ENCODE measurements at regions of chr15 and their contacts with region 1.

Region 1: DNA sequence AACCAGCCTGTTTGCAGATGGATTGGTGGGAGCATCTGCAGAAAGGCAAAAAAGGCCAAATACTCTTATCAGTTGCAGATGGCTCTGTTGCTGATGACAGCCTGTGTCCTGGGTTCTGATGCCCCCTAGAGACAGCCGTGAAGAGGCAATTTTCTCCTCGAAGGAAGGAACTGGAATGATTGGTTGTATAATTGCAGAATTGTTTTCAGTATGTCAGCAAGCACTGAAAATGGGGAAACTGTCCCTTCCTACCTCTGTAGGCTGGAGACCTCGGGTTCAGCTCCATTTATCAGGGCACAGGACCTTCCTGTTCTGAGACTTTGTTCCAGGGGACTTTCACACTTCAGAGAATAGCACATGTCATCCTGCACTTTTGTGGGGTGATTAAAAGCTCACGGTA is 103.0 kb downstream of the PGPEP1L start:
- DNase-seq: peak; percentile 84
- H3K4me3 ChIP-seq: no peak overlapping the region
- H3K27ac ChIP-seq: peak overlapping the region; percentile 48 to 73; a peak in 3 of 4 replicates
- H3K4me1 ChIP-seq: peaks cover 24 to 28% of the 10 kb centered on the region in 2 experiments; a peak in 3 of 4 replicates
- H3K27me3 ChIP-seq: no peaks in the 10 kb centered on the region
- CTCF ChIP-seq: peak; percentile 75
- EP300 ChIP-seq: no peak; a peak in 1 of 4 replicates
- RAD21 ChIP-seq: peak; percentile 93

Region 2: DNA sequence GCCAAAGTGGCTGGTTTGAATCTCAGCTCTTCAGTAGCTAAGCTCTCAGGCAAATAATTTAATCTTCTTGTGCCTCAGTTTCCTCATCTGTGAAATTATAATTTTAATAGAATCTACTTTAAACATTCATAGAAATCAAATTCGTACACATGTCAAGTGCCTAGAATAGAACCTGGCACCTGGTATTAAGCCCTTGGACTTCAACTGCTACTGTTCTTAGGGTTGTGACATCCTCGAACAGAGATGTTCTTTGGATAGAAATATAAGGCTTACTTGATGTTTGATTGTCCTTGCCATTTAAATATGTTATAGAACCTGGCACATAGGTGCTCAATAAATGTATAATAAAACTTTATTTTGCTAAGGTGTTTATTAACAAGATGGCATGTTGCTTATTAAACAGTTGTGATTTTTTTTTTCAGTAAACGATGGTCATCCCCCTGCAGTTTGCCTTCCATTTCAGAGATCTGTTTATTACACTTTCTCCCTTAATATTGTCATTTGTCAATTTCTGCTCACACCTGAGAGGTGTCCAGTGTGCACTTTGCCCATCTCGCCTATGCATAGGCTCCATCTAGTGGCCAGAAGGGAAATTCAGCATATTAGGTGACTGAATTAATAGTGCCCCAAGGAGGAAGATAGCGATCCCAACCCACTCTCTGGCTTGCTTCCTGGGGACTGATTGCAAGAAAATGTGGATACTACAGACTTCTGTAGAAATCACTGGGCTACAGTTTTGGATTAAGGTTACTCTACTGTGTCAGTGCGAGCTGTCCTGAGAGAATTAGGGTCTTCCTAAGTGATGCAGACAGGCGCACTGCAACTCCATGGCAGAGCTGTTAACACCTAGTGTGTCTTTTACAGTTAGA is 245.5 kb before region 1 on chr15:
- CTCF ChIA-PET with region 1: interaction called, 10 read pairs
- POLR2A ChIA-PET with region 1: no interaction called
- DNase-seq: peak; percentile 75
- H3K4me3 ChIP-seq: no peak overlapping the region
- H3K27ac ChIP-seq: no peak overlapping the region
- H3K4me1 ChIP-seq: peaks cover 0 to 30% of the 10 kb centered on the region in 2 experiments; a peak in 2 of 4 replicates
- H3K27me3 ChIP-seq: no peaks in the 10 kb centered on the region
- CTCF ChIP-seq: peak; percentile 94
- EP300 ChIP-seq: no peak
- RAD21 ChIP-seq: peak; percentile 75

Region 3: DNA sequence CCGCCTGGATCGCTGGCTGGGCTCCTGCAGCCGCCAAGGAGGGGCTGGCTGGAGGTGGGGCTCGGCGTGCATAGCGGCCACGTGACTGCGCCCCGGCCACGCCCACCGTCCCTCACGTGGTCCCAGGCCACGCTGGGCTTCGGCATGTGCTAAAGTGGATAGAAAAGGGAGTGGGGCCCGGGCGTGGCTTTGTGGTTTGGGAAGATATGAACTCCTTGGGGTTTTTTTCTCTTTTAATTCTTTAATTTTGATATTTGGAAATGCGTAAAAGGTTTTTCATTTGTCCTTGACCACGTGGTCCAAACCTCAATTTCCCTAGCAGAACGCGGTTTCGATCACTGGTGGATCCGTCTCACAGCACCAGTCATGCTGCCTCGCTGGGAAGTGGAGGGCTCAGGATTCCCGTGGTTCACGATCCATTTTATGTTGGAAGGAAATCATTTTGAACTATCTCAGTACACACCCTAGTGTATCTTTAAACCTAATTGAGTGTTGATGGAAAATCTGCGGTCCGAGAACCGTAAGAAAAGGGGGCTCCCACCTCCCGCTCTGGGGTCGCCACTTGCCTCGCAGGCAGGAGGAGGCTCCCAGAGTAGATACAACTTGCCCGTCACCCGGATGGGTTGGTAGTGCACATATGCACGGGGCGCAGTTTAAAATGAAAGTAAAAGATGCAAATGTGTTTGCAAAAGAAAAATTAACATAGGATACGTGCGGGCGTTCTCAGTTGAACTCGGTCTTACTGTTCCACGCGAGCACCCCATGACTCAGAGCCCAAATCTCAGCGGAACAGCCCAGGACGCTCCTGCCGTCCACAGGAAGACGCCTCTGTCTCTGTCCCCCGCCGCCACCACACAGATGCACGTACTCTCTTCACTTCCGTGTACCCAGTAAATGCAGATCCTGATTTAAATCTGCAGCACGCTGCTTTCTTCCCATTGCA is 38.9 kb before region 1 on chr15:
- CTCF ChIA-PET with region 1: interaction called, 10 read pairs
- POLR2A ChIA-PET with region 1: no interaction called
- DNase-seq: peak; percentile 84
- H3K4me3 ChIP-seq: peak overlapping the region; percentile 60 to 65
- H3K27ac ChIP-seq: peak overlapping the region; percentile 90 to 91
- H3K4me1 ChIP-seq: peaks cover 3 to 27% of the 10 kb centered on the region in 2 experiments; a peak in 3 of 4 replicates
- H3K27me3 ChIP-seq: no peaks in the 10 kb centered on the region
- CTCF ChIP-seq: no peak
- EP300 ChIP-seq: no peak
- RAD21 ChIP-seq: no peak

Region 4: DNA sequence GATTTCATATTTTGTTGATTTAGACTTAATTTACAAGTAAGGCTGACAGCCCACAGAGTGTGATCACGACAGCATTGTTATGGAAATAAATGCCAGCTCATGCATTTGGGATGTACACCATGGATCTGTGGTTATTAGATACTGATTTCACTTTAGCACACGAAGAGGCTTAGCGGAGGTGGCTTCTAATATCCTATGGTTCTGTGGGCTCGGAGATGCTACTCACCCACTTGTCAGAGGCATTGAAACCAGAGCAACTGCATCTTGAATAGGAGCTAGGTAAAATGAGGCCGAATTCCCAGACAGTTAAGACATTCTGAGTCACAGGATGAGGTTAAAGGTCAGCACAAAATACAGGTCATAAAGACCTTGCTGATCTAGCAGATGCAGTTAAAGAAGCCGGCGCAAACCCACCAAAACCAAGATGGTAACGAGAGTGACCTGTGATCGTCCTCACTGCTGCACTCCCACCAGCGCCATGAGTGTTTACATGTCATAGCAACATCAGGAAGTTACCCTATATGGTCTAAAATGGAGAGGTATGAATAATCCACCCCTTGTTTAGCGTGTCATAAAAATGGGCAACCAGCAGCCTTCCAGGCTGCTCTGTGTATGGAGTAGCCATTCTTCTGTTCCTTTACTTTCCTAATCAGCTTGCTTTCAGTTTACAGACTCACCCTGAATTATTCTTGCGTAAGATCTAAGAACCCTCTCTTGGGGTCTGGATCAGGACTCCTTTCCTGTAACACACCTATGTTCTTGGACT is 14.4 kb before region 1 on chr15:
- CTCF ChIA-PET with region 1: interaction called, 34 read pairs
- POLR2A ChIA-PET with region 1: no interaction called
- DNase-seq: no peak
- H3K4me3 ChIP-seq: no peak overlapping the region
- H3K27ac ChIP-seq: peak overlapping the region; percentile 24 to 72; a peak in 3 of 4 replicates
- H3K4me1 ChIP-seq: peaks cover 11 to 16% of the 10 kb centered on the region in 2 experiments; a peak in 3 of 4 replicates
- H3K27me3 ChIP-seq: no peaks in the 10 kb centered on the region
- CTCF ChIP-seq: no peak
- EP300 ChIP-seq: no peak
- RAD21 ChIP-seq: no peak

Region 5: GRCh38 chr15:99082798-99083197 is 178.3 kb after region 1 on chr15:
- CTCF ChIA-PET with region 1: no interaction called
- POLR2A ChIA-PET with region 1: no interaction called
- DNase-seq: no peak
- H3K4me3 ChIP-seq: no peak overlapping the region
- H3K27ac ChIP-seq: no peak overlapping the region
- H3K4me1 ChIP-seq: no peaks in the 10 kb centered on the region
- H3K27me3 ChIP-seq: no peaks in the 10 kb centered on the region
- CTCF ChIP-seq: no peak
- EP300 ChIP-seq: no peak
- RAD21 ChIP-seq: no peak

Measured in SK-N-SH (cell line).